ENCODE measurements at regions of chr3 and their contacts with region 1.

Region 1: DNA sequence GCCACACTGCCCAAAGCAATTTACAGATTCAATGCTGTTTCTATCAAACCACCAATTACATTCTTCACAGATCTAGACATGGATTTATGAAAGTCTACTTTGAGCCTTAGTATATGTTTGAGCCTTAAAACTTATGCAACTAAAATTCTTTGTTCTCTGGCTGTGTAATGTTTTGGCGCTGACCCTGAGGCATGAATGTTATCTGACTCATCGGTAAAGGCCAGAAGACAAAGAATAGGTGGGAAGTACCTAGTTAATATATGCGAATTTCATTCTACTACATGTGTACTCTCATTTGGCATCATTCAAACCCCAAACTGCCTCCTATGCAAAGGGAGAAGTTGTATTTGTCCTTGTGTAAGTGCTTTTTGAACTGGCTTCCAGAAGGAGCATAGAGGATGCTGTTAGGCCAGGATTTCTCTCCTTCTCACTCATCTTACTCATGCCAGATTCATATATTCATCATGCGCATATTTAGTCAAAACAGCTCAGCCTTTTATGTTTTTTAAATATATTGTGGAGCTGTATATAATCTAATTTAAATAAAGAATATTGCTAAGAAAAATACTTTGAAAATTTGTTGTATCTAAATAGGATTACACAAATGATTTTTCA is 204.2 kb downstream of the NFKBIZ start:
- DNase-seq: no peak

Region 2: DNA sequence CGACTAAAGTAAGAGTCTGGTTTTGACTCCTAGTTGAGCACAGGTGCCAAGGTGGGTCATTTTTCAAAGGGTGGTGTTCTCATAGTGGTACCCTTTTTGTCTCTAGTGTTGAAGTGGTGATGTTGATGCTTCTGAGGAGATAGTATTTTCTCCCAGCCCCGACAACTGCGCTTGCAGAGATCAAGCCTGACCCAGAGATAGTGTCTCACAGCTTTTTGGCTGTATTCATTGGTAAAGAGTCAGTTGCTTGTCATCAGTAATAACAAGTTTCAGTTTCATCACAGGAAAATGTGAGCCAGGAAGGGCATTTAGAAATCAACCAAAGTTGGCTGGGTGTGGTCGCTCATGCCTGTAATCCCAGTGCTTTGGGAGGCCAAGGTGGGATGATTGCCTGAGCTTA is 64.9 kb before region 1 on chr3:
- intact Hi-C with region 1: loop called in 1 of 2 experiments (anchors 2 kb)
- DNase-seq: no peak

Measured in posterior vena cava (tissue), 2 donors.